Panc1 (cell line): ENCODE measurements at regions of chr5 and their contacts with region 1.

Region 1: DNA sequence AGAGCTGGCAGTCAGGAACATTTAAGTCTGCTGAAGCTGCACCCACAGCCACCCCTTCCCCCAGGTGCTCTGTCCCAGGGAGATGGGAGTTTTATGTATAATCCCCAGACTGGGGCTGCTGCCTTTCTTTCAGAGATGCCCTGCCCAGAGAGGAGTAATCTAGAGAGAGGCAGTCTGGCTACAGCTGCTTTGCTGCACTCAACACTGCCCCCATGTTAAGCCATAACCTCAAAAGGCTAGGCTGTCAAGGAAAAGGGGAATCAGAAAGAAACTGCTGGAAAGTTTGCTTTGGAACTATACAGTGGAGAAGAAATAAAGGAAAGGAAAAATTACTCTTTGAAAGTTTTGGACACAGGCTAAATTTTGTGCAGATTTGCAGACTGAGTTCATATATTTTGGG is 127.2 kb downstream of the MACIR start:
- DNase-seq: no peak
- ATAC-seq: no peak
- H3K4me3 ChIP-seq: no peak overlapping the region
- H3K27ac ChIP-seq: no peak overlapping the region
- H3K4me1 ChIP-seq: no peaks in the 10 kb centered on the region
- H3K27me3 ChIP-seq: no peaks in the 10 kb centered on the region
- CTCF ChIP-seq: peak; percentile 10; the same call in 1 of the 2 replicates

Region 2: GRCh38 chr5:102865510-102866236 is 520.0 kb before region 1 on chr5:
- CTCF ChIA-PET with region 1: no interaction called
- POLR2A ChIA-PET with region 1: no interaction called
- in situ Hi-C with region 1: no loop called
- intact Hi-C with region 1: no loop called
- DNase-seq: no peak
- ATAC-seq: peak; percentile 93
- H3K4me3 ChIP-seq: peak overlapping the region; percentile 76 to 87
- H3K27ac ChIP-seq: peak overlapping the region; percentile 90
- H3K4me1 ChIP-seq: peaks cover 22% of the 10 kb centered on the region
- H3K27me3 ChIP-seq: no peaks in the 10 kb centered on the region
- CTCF ChIP-seq: no peak

Region 3: DNA sequence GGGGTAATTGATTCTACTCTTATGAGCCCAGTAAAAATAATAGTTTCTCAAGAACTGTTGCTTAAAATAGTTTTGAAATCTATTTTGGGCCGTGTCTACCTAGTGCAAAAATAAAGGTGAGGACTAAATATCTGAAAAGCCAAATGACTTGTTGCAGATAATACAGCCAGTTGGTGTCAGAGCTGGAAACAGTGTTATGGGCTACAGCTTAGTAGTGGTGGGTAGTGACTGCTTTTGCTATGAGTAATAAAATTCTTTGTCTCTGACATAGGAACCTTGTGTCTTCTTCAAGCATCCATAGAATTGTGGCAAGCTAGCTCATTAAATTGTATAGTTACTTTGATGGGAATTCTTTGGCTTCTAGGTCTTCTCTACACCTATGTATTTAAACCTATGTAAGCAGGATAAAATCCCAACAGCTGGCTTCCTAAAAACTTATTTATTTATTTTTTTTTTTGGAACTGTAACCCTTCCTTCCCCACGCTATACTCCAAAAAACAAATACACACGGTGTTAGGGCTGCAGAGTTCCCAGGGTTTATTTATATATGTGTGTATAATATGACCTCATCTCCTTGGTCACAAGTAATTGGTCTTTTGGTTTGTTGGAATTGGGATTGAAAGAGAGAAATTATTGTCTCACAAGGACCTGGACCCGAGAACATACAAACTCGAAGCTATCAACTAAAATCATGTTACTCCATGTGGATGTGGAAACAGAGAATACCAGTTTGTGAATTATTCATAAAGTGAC is 38.9 kb after region 1 on chr5:
- CTCF ChIA-PET with region 1: interaction called, 10 read pairs
- POLR2A ChIA-PET with region 1: no interaction called
- in situ Hi-C with region 1: no loop called
- intact Hi-C with region 1: no loop called
- DNase-seq: no peak
- ATAC-seq: no peak
- H3K4me3 ChIP-seq: no peak overlapping the region
- H3K27ac ChIP-seq: no peak overlapping the region
- H3K4me1 ChIP-seq: no peaks in the 10 kb centered on the region
- H3K27me3 ChIP-seq: no peaks in the 10 kb centered on the region
- CTCF ChIP-seq: no peak